ENCODE measurements at regions of chr17 and their contacts with region 1.

Region 1: GRCh38 chr17:78865682-78866390 is 25.2 kb upstream of the USP36 start:
- DNase-seq: peak; percentile 90 to 92 (median 91)
- ATAC-seq: peak; percentile 81
- H3K4me3 ChIP-seq: no peak overlapping the region
- H3K27ac ChIP-seq: peak overlapping the region in 3 of 4 donors; percentile 55 to 73 (median 65)
- H3K4me1 ChIP-seq: peaks cover 27% of the 10 kb centered on the region
- H3K27me3 ChIP-seq: no peaks in the 10 kb centered on the region
- CTCF ChIP-seq: peak; percentile 86 to 97 (median 95)
- POLR2A ChIP-seq: no peak

Region 2: GRCh38 chr17:78965491-78965948 is 99.7 kb after region 1 on chr17:
- intact Hi-C with region 1: loop called (anchors 5 kb)
- DNase-seq: no peak
- ATAC-seq: no peak
- H3K4me3 ChIP-seq: no peak overlapping the region
- H3K27ac ChIP-seq: no peak overlapping the region
- H3K4me1 ChIP-seq: peaks cover 2% of the 10 kb centered on the region
- H3K27me3 ChIP-seq: no peaks in the 10 kb centered on the region
- CTCF ChIP-seq: no peak
- POLR2A ChIP-seq: no peak